ENCODE measurements at regions of chrX and their contacts with region 1.

Region 1: DNA sequence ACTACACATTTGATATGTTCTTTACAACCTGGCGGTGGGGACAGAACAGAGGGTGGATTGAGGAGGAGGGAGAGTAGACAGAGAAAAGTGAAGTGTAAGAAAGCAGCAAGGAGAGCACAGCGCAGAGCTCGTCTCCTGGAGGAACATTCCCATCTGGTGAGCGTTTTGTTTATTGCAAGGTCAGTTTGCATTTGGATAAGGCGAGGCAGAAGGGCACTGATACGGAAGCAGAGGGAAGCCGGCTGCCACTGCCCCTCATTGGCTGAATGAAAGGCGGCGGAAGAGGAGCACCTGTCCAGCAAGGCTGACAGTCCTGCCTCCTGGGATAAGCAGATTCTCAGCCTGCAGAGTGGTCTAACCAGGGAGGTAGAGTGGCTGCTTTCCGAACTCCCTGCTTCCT is 83.2 kb downstream of the GPR143 start:
- DNase-seq: no peak
- H3K4me3 ChIP-seq: no peak overlapping the region
- H3K27ac ChIP-seq: no peak overlapping the region
- H3K4me1 ChIP-seq: no peaks in the 10 kb centered on the region
- H3K27me3 ChIP-seq: no peaks in the 10 kb centered on the region
- CTCF ChIP-seq: peak; percentile 28 to 42 (median 34)
- EP300 ChIP-seq: no peak
- POLR2A ChIP-seq: no peak

Region 2: GRCh38 chrX:8971116-8971515 is 711.3 kb before region 1 on chrX:
- intact Hi-C with region 1: loop called (anchors 5 kb)
- DNase-seq: no peak
- H3K4me3 ChIP-seq: no peak overlapping the region
- H3K27ac ChIP-seq: no peak overlapping the region
- H3K4me1 ChIP-seq: no peaks in the 10 kb centered on the region
- H3K27me3 ChIP-seq: no peaks in the 10 kb centered on the region
- CTCF ChIP-seq: peak in 3 of 4 experiments; percentile 15 to 33 (median 15)
- EP300 ChIP-seq: no peak
- POLR2A ChIP-seq: no peak

Region 3: DNA sequence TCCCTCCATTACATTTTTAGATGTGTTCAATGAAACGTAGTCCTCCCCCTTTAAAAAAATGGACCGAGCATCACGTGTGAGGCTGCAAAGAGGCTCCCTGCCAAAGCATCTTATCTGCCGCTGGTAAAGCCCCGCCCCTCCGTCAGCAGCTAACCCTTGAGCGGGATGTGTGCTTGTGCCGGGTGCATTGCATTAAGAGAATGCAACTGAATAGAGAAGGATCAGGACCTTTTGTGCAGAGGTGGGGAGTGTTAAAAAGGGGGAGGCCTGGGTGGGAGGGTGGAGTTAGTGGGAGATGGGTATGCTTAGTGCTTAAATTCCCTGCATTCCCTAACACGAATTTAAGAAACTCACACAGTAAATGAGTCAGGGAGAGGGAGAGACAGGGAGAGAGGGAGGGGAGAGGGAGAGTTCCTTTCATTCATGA is 151.6 kb before region 1 on chrX:
- intact Hi-C with region 1: loop called (anchors 5 kb)
- DNase-seq: peak; percentile 78
- H3K4me3 ChIP-seq: no peak overlapping the region
- H3K27ac ChIP-seq: peak overlapping the region in 1 of 4 donors; percentile 29
- H3K4me1 ChIP-seq: peaks cover 0 to 47% (median 28%) of the 10 kb centered on the region in 4 donors
- H3K27me3 ChIP-seq: no peaks in the 10 kb centered on the region
- CTCF ChIP-seq: no peak
- EP300 ChIP-seq: no peak
- POLR2A ChIP-seq: no peak

Region 4: DNA sequence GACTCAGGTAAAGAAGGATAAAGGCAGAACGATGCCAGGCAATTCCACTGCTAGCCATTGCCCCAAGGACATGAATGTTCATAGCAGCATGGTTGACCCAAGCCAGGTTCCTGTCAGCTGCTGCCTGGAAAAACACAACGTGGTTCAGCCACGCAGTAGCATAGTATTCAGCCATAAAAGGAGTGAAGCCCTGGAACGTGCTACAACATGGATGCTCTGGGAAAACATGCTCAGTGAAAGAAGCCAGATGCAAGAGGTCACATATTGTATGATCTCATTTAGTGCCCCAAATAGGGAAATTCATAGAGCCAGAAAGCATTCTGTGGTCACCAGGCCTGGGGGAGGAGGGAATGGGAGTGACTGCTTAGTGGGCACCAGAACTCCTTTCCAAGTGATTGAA is 46.7 kb before region 1 on chrX:
- intact Hi-C with region 1: no loop called
- DNase-seq: peak; percentile 80
- H3K4me3 ChIP-seq: no peak overlapping the region
- H3K27ac ChIP-seq: peak overlapping the region; percentile 65 to 82 (median 74)
- H3K4me1 ChIP-seq: peaks cover 0 to 19% (median 8%) of the 10 kb centered on the region in 4 donors
- H3K27me3 ChIP-seq: no peaks in the 10 kb centered on the region
- CTCF ChIP-seq: no peak
- EP300 ChIP-seq: peak; percentile 6 to 79 (median 58)
- POLR2A ChIP-seq: no peak

Measured in sigmoid colon (tissue), 7 donors.